Right ventricle myocardium inferior (tissue), 1 donor: ENCODE measurements at regions of chrX and their contacts with region 1.

Region 1: DNA sequence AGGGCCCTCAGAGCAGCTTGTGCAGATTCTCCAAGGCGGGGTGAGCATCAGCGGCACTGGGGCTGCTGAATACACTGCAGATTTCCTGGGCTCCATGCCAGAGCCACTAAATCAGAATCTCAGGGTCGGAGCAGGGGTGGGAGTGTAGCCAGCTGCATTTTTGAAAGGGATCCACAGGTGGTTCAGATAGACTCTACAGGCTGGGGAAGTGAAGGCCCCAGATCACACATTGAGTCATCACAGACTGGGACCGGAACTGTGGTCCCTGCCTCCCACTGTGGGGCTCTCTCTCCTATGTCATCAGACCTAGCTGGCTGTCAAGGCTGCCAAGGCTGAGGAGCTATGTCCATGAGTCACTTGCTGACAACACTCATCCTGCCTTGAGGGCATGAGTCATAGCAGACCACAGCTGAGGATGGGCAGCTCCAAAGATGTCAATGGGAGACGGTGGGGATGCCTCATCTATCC is 162.3 kb upstream of the MAMLD1 start:
- DNase-seq: no peak
- ATAC-seq: peak; percentile 31

Region 2: GRCh38 chrX:149950681-149951080 is 250.2 kb before region 1 on chrX:
- intact Hi-C with region 1: loop called (anchors 10 kb)
- DNase-seq: no peak
- ATAC-seq: no peak